Endothelial cell of umbilical vein (primary cell): ENCODE measurements at regions of chr13 and their contacts with region 1.

Region 1: GRCh38 chr13:31699650-31700049 is 39.7 kb upstream of the RXFP2 start:
- DNase-seq: peak; percentile 47
- H3K4me3 ChIP-seq: no peak overlapping the region
- H3K27ac ChIP-seq: no peak overlapping the region
- H3K4me1 ChIP-seq: no peaks in the 10 kb centered on the region
- H3K27me3 ChIP-seq: peaks cover 4 to 6% of the 10 kb centered on the region in 2 experiments
- CTCF ChIP-seq: peak; percentile 40 to 62
- POLR2A ChIP-seq: no peak

Region 2: GRCh38 chr13:31431722-31432137 is 267.9 kb before region 1 on chr13:
- CTCF ChIA-PET with region 1: interaction called, 35 read pairs
- POLR2A ChIA-PET with region 1: no interaction called
- dilution Hi-C with region 1: no loop called
- intact Hi-C with region 1: loop called (anchors 1 kb)
- DNase-seq: peak; percentile 33
- H3K4me3 ChIP-seq: no peak overlapping the region
- H3K27ac ChIP-seq: no peak overlapping the region
- H3K4me1 ChIP-seq: peaks cover 5% of the 10 kb centered on the region
- H3K27me3 ChIP-seq: peaks cover 5 to 9% of the 10 kb centered on the region in 2 experiments
- CTCF ChIP-seq: peak; percentile 46 to 84
- POLR2A ChIP-seq: no peak

Region 3: DNA sequence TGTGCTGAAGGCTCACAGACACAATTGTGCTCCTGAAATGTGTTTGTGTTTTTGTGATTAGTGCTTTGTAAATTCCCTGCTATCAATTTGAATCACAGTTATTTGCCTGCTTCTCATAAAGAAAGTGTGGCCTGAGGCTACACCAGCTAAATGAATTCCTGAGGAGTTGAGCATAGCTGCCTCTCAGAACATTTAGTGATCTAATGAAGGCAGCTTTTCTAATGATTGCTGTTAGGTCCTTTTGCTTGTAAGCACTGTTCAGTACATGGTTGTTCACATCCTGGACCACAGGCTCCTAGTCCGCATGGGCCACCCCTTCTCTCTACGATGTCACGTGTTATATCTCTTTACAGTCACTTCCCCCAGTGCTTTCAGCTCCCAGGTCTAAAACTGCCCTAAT is 261.7 kb before region 1 on chr13:
- CTCF ChIA-PET with region 1: interaction called, 13 read pairs
- POLR2A ChIA-PET with region 1: no interaction called
- dilution Hi-C with region 1: no loop called
- intact Hi-C with region 1: no loop called
- DNase-seq: no peak
- H3K4me3 ChIP-seq: no peak overlapping the region
- H3K27ac ChIP-seq: no peak overlapping the region
- H3K4me1 ChIP-seq: no peaks in the 10 kb centered on the region
- H3K27me3 ChIP-seq: peaks cover 15 to 18% of the 10 kb centered on the region in 2 experiments
- CTCF ChIP-seq: no peak
- POLR2A ChIP-seq: no peak

Region 4: GRCh38 chr13:31629085-31629780 is 70.4 kb before region 1 on chr13:
- CTCF ChIA-PET with region 1: interaction called, 11 read pairs
- POLR2A ChIA-PET with region 1: no interaction called
- dilution Hi-C with region 1: no loop called
- intact Hi-C with region 1: no loop called
- DNase-seq: peak; percentile 33
- H3K4me3 ChIP-seq: no peak overlapping the region
- H3K27ac ChIP-seq: peak overlapping the region; percentile 11
- H3K4me1 ChIP-seq: peaks cover 31% of the 10 kb centered on the region
- H3K27me3 ChIP-seq: no peaks in the 10 kb centered on the region
- CTCF ChIP-seq: no peak
- POLR2A ChIP-seq: no peak

Region 5: GRCh38 chr13:31742097-31742734 is 42.6 kb after region 1 on chr13:
- CTCF ChIA-PET with region 1: interaction called, 18 read pairs
- POLR2A ChIA-PET with region 1: no interaction called
- dilution Hi-C with region 1: no loop called
- intact Hi-C with region 1: no loop called
- DNase-seq: peak; percentile 64
- H3K4me3 ChIP-seq: no peak overlapping the region
- H3K27ac ChIP-seq: no peak overlapping the region
- H3K4me1 ChIP-seq: no peaks in the 10 kb centered on the region
- H3K27me3 ChIP-seq: peaks cover 0 to 2% of the 10 kb centered on the region in 2 experiments
- CTCF ChIP-seq: peak; percentile 88 to 95
- POLR2A ChIP-seq: no peak

Region 6: GRCh38 chr13:31998131-31998530 is 298.5 kb after region 1 on chr13:
- CTCF ChIA-PET with region 1: no interaction called
- POLR2A ChIA-PET with region 1: no interaction called
- dilution Hi-C with region 1: no loop called
- intact Hi-C with region 1: no loop called
- DNase-seq: no peak
- H3K4me3 ChIP-seq: no peak overlapping the region
- H3K27ac ChIP-seq: no peak overlapping the region
- H3K4me1 ChIP-seq: no peaks in the 10 kb centered on the region
- H3K27me3 ChIP-seq: no peaks in the 10 kb centered on the region
- CTCF ChIP-seq: no peak
- POLR2A ChIP-seq: no peak

Region 7: DNA sequence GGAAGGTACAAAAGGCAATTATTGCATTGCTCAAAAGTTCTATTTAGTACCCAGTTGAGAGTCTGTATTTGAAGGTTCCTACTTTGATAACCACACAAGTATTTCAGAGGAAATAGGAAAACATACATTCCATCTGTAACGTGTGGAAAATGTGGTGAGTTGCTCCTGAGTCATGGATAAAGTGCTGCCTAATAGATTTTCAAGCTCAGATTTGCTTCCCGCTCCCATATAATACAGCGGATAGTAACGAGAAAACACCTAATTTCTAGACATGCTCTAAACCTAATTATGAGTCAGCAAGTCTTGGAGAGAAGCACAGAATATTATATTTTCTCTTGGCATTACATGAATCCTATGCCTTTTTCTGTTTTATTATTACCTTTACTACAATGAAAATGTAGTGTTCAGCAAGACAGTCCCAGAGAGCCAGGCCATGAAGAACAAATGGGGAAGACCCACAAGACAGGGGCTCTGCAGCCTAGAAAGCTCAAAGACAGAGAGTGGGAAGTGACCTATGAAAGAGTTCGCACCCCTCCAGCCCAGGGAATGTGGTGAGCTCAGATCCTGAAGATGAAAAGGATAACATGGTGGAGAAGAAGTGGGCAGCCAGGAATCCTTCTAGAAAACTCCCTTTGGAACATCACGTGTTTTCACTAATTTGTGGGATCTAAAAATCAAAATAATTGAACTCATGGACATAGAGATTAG is 1469.8 kb after region 1 on chr13:
- CTCF ChIA-PET with region 1: no interaction called
- POLR2A ChIA-PET with region 1: no interaction called
- dilution Hi-C with region 1: no loop called
- intact Hi-C with region 1: no loop called
- DNase-seq: peak; percentile 87
- H3K4me3 ChIP-seq: no peak overlapping the region
- H3K27ac ChIP-seq: peak overlapping the region; percentile 83
- H3K4me1 ChIP-seq: peaks cover 22% of the 10 kb centered on the region
- H3K27me3 ChIP-seq: no peaks in the 10 kb centered on the region
- CTCF ChIP-seq: no peak
- POLR2A ChIP-seq: no peak